ENCODE measurements at regions of chr4 and their contacts with region 1.

Region 1: GRCh38 chr4:81146466-81146865 is 68.6 kb downstream of the PRKG2 start:
- DNase-seq: no peak
- H3K4me3 ChIP-seq: no peak overlapping the region
- H3K27ac ChIP-seq: no peak overlapping the region
- H3K4me1 ChIP-seq: no peaks in the 10 kb centered on the region
- CTCF ChIP-seq: no peak

Region 2: DNA sequence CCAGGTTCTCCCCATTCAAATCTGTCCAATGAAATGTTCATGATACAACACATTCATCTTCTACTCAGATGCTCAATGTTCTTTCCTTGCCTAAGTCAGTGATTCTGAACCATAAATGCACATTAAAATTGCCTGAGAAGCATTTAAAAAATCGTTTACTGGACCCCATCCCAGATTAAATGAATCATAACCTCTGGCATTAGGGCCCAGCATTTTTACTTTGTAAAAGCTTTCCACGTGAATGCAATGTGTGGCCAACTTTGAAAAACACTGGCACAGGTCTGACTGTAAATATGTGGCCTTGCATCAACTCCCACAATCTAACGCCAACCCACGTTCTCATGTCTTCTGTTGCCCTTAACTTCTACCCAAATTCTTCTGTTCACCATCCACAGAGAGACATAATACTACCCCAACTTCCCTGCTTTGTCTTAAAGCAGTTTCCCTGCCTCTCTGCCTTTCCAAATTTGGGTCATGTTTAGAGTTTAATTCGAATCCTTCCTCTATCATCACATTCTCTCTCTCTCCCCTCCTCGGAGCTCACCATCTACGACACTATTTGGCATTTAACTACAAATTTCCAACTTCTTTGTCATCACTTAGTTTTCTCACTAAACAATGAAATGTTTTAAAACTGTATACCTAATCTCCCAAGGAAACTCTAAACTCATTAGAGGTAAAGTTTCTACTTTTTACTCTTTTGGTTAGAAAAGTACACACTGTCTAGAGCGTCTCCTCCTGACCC is 10.1 kb before region 1 on chr4:
- CTCF ChIA-PET with region 1: no interaction called
- POLR2A ChIA-PET with region 1: interaction called, 11 read pairs
- intact Hi-C with region 1: no loop called
- DNase-seq: no peak
- H3K4me3 ChIP-seq: no peak overlapping the region
- H3K27ac ChIP-seq: no peak overlapping the region
- H3K4me1 ChIP-seq: no peaks in the 10 kb centered on the region
- CTCF ChIP-seq: no peak

Region 3: DNA sequence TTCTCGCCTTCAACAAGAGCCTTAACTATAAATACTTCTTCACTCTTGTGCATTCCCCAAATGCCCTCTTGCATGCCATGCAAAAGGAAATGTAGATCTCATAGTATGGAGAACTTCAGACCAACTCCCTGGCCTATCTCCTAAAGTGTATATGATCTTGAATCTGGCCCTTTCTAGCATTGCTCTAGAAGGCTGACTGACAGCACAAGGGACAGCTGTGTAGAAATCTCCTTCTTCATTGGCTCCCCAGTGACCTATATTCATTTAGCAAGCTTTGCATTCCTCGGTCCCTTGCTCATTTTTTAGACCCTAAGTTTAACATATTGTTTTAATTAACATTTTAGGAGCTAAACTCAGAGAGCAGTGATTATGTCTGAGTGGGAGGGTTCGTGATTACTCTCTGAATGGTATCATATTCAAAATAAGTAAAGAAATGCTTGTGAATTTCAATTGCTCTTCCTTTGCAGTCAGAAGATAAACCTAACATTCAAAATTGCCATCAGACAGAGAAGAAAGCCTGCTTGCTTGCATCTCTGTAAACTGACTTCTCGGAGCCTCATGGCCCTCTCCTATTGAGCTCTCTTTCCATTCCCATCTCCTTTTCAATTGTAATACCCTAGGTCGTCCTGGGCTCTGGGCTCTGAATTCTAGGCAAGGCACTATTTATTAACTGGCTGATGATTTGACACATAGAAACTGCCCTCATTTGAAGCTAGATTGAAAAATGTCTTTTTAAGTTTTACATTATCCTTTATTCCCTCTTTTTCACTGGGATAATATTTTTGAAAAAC is 188.9 kb after region 1 on chr4:
- CTCF ChIA-PET with region 1: no interaction called
- POLR2A ChIA-PET with region 1: no interaction called
- intact Hi-C with region 1: no loop called
- DNase-seq: no peak
- H3K4me3 ChIP-seq: no peak overlapping the region
- H3K27ac ChIP-seq: no peak overlapping the region
- H3K4me1 ChIP-seq: no peaks in the 10 kb centered on the region
- CTCF ChIP-seq: no peak

Measured in OCI-LY7 (cell line).